Right cardiac atrium (tissue), 5 donors: ENCODE measurements at regions of chr21 and their contacts with region 1.

Region 1: GRCh38 chr21:26170471-26171257 is at the start of gene APP:
- DNase-seq: peak; percentile 87 to 96 (median 95)
- ATAC-seq: peak; percentile 90 to 91
- H3K4me3 ChIP-seq: peak within 1 kb of the TSS; percentile 62
- H3K27ac ChIP-seq: peak within 1 kb of the TSS; percentile 33
- H3K4me1 ChIP-seq: peaks cover 2% of the 10 kb centered on the region
- H3K27me3 ChIP-seq: no peaks in the 10 kb centered on the region
- total RNA-seq, gene APP: 433 to 535 (median 472) TPM

Region 2: GRCh38 chr21:25890001-25890400 is 280.7 kb before region 1 on chr21:
- intact Hi-C with region 1: loop called in 2 of 4 experiments (anchors 5 to 10 kb)
- DNase-seq: no peak
- ATAC-seq: no peak
- H3K4me3 ChIP-seq: no peak overlapping the region
- H3K27ac ChIP-seq: no peak overlapping the region
- H3K4me1 ChIP-seq: peaks cover 5% of the 10 kb centered on the region
- H3K27me3 ChIP-seq: no peaks in the 10 kb centered on the region

Region 3: DNA sequence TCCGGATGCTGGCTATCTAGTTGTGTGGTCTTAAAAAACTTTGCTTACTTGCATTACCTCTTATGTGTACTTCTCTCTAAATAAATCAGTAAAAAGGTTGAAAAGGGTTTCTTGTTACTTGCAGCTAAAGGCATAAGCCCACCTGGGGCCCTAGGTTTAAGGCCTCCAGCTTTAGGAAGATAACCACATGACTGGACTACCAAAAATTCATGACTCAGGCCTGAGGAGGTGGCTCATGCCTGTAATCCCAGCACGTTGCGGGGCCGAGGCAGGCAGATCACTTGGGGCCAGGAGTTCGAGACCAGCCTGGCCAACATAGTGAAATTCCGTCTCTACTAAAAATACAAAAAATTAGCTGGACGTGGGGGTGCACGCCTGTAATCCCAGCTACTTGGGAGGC is 143.0 kb before region 1 on chr21:
- intact Hi-C with region 1: loop called in 1 of 4 experiments (anchors 10 kb)
- DNase-seq: no peak
- ATAC-seq: no peak
- H3K4me3 ChIP-seq: no peak overlapping the region
- H3K27ac ChIP-seq: no peak overlapping the region
- H3K4me1 ChIP-seq: peaks cover 4% of the 10 kb centered on the region
- H3K27me3 ChIP-seq: no peaks in the 10 kb centered on the region

Region 4: GRCh38 chr21:26116456-26117011 is 54.1 kb before region 1 on chr21:
- intact Hi-C with region 1: loop called in 1 of 4 experiments (anchors 10 kb)
- DNase-seq: peak in 1 of 3 donors; percentile 51
- ATAC-seq: peak; percentile 53 to 81
- H3K4me3 ChIP-seq: no peak overlapping the region
- H3K27ac ChIP-seq: peak overlapping the region; percentile 86
- H3K4me1 ChIP-seq: peaks cover 1% of the 10 kb centered on the region
- H3K27me3 ChIP-seq: no peaks in the 10 kb centered on the region

Region 5: DNA sequence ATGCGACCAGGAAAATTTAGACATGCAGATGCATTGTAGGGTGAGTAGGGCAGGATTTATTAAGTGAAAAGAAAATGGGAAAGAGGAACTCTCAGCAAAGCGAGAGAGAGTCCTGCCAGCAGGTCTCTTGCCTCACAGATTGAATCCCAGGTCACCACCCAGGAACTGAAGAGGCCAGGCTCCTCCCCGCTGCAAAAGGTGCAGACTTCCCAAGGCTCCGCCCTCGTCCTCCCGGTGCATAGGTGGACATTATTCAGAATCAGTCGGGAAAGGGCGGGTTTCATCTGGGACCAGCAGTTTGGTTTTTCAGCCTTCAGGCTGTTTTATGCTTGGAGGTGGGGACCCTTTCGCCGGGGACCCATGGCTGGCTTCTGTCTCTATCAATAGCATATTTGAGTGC is 41.5 kb after region 1 on chr21:
- intact Hi-C with region 1: no loop called
- DNase-seq: no peak
- ATAC-seq: no peak
- H3K4me3 ChIP-seq: no peak overlapping the region
- H3K27ac ChIP-seq: no peak overlapping the region
- H3K4me1 ChIP-seq: no peaks in the 10 kb centered on the region
- H3K27me3 ChIP-seq: no peaks in the 10 kb centered on the region